CD8-positive, alpha-beta memory T cell (primary cell): ENCODE measurements at regions of chr15 and their contacts with region 1.

Region 1: GRCh38 chr15:50182219-50183013 is 420 bp downstream of the SLC27A2 start:
- DNase-seq: peak in 4 of 5 donors; percentile 17 to 68 (median 33)
- H3K4me3 ChIP-seq: peak overlapping the region; percentile 66
- H3K4me3 Mint-ChIP-seq: peak overlapping the region; percentile 93 to 98 (median 95)
- H3K27ac ChIP-seq: peak overlapping the region; percentile 55
- H3K27ac Mint-ChIP-seq: peak overlapping the region in 7 of 8 donors; percentile 11 to 85 (median 41)
- H3K4me1 ChIP-seq: peaks cover 12% of the 10 kb centered on the region
- H3K4me1 Mint-ChIP-seq: peaks cover 15 to 27% (median 22%) of the 10 kb centered on the region in 3 donors
- H3K27me3 ChIP-seq: no peaks in the 10 kb centered on the region
- H3K27me3 Mint-ChIP-seq: no peaks in the 10 kb centered on the region

Region 2: GRCh38 chr15:50055332-50055731 is 127.1 kb before region 1 on chr15:
- CTCF ChIA-PET with region 1: no interaction called
- POLR2A ChIA-PET with region 1: no interaction called
- DNase-seq: no peak
- H3K4me3 ChIP-seq: no peak overlapping the region
- H3K4me3 Mint-ChIP-seq: no peak overlapping the region
- H3K27ac ChIP-seq: no peak overlapping the region
- H3K27ac Mint-ChIP-seq: no peak overlapping the region
- H3K4me1 ChIP-seq: no peaks in the 10 kb centered on the region
- H3K4me1 Mint-ChIP-seq: no peaks in the 10 kb centered on the region
- H3K27me3 ChIP-seq: no peaks in the 10 kb centered on the region
- H3K27me3 Mint-ChIP-seq: no peaks in the 10 kb centered on the region

Region 3: DNA sequence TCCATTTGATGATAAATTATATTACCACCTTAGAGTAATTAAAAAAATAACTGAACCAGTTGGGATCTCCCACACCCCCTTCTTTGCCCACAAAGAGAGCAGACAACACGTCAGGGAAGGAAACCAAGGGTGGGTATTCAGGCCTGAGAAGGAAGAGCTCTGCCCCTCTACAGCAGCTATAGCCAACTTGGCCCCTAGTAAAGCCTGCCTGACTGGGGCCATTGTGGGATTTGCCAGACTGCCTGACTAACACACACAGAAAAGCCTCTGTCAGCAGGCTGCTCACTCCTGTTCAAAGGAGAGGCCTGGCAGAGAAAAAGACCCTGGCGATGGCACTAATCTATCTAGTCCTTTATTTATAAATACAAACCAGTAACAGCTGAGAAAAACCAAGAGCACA is 104.8 kb before region 1 on chr15:
- CTCF ChIA-PET with region 1: no interaction called
- POLR2A ChIA-PET with region 1: no interaction called
- DNase-seq: no peak
- H3K4me3 ChIP-seq: no peak overlapping the region
- H3K4me3 Mint-ChIP-seq: no peak overlapping the region
- H3K27ac ChIP-seq: no peak overlapping the region
- H3K27ac Mint-ChIP-seq: no peak overlapping the region
- H3K4me1 ChIP-seq: no peaks in the 10 kb centered on the region
- H3K4me1 Mint-ChIP-seq: no peaks in the 10 kb centered on the region
- H3K27me3 ChIP-seq: no peaks in the 10 kb centered on the region
- H3K27me3 Mint-ChIP-seq: no peaks in the 10 kb centered on the region

Region 4: DNA sequence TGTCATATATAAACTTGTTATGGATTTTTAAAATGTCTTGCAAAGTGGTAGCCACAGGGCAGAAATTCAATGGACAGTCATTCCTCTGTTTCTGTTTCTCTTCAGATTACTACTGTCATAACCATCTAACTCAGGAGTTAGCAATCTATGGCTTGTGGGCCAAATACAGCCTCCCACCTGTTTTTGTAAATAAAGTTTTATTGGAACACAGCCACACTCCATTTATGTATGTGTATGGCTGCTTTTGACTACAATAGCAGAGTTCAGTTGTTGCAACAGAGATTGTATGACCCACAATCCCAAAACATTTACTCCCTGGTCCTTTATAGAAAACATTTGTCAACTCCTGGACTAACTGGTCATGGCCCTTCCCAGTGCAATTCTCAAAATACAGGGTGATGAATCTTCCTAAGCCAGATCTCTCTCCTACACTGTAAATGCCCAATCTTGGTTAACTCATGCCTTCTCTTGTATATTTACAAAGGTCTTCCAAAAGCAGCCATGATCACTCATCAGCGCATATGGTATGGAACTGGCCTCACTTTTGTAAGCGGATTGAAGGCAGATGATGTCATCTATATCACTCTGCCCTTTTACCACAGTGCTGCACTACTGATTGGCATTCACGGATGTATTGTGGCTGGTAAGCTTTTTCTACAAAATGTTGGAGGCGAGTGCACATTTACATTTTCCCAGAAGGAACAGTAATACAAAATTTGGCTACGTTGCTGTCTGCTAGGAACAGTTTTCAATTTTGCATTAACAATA is 19.8 kb after region 1 on chr15:
- CTCF ChIA-PET with region 1: no interaction called
- POLR2A ChIA-PET with region 1: no interaction called
- DNase-seq: no peak
- H3K4me3 ChIP-seq: no peak overlapping the region
- H3K4me3 Mint-ChIP-seq: no peak overlapping the region
- H3K27ac ChIP-seq: no peak overlapping the region
- H3K27ac Mint-ChIP-seq: no peak overlapping the region
- H3K4me1 ChIP-seq: no peaks in the 10 kb centered on the region
- H3K4me1 Mint-ChIP-seq: no peaks in the 10 kb centered on the region
- H3K27me3 ChIP-seq: no peaks in the 10 kb centered on the region
- H3K27me3 Mint-ChIP-seq: no peaks in the 10 kb centered on the region

Region 5: DNA sequence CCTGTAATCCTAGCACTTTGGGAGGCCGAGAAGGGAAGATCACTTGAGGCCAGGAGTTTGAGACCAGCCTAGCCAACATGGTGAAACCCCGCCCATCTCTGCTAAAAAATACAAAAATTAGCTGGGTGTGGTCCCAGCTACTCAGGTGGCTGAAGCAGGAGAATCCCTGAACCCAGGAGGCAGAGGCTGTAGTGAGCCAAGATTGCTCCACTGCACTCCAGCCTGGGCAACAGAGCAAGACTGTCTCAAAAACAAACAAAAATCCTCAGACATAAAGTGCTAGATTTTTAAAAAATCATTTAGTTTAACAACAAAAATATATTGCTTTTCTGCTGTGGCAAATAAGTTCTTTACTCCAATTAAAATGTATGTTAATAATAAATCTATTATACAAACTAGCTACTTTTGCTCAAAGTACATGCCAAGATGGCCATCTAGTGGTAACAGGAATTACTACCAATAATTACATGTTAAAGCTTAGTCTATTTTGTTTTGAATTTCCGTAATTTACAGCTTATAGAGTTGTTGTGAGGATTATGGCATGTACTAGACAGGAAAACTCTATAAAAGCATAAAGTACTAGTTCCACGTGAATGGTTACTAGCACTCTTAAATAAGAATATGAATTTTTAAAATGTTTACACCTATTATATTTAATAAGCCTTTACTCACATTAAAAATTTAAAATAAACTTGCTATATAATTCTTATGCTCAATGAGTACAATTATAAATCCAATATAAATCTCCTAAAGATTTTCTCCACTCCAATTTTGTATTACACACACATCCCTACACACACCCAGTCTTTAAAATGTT is 133.6 kb after region 1 on chr15:
- CTCF ChIA-PET with region 1: interaction called, 15 read pairs
- POLR2A ChIA-PET with region 1: no interaction called
- DNase-seq: peak in 2 of 5 donors; percentile 23 to 28
- H3K4me3 ChIP-seq: no peak overlapping the region
- H3K4me3 Mint-ChIP-seq: no peak overlapping the region
- H3K27ac ChIP-seq: no peak overlapping the region
- H3K27ac Mint-ChIP-seq: peak overlapping the region in 1 of 8 donors; percentile 13
- H3K4me1 ChIP-seq: peaks cover 3% of the 10 kb centered on the region
- H3K4me1 Mint-ChIP-seq: peaks cover 11 to 31% (median 27%) of the 10 kb centered on the region in 3 donors
- H3K27me3 ChIP-seq: no peaks in the 10 kb centered on the region
- H3K27me3 Mint-ChIP-seq: no peaks in the 10 kb centered on the region

Region 6: DNA sequence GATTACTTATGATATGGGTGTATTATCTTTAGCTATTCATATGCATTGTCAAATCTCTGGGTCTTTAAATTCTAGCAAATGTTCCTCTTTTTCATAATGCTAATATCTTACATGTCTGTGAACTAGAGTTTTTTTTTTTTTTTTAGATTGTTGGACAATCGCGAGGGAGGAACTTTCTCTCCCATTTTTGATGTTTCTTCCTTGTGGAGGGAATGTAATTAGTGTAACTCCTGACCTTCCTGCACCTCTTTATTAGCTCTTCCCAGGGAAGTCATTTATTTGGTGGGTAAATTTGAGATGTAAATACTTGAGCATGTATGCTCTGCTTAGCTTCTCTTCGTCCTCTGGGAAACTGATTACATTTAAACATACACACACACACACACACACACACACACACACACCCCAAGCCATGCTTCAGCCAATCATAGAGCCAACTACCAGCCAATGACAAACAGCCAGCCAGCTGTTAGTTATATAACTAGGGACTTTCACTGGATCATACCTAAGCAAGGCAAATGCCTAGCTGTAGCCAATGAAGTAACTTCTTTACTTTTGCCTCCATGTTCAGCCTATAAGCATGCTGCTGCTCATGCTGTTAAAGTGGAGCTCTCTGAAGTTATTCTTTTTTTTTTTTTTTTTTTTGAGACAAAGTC is 233.5 kb after region 1 on chr15:
- CTCF ChIA-PET with region 1: no interaction called
- POLR2A ChIA-PET with region 1: no interaction called
- DNase-seq: no peak
- H3K4me3 ChIP-seq: no peak overlapping the region
- H3K4me3 Mint-ChIP-seq: no peak overlapping the region
- H3K27ac ChIP-seq: no peak overlapping the region
- H3K27ac Mint-ChIP-seq: no peak overlapping the region
- H3K4me1 ChIP-seq: no peaks in the 10 kb centered on the region
- H3K4me1 Mint-ChIP-seq: no peaks in the 10 kb centered on the region
- H3K27me3 ChIP-seq: no peaks in the 10 kb centered on the region
- H3K27me3 Mint-ChIP-seq: no peaks in the 10 kb centered on the region